Endothelial cell of umbilical vein (primary cell): ENCODE measurements at regions of chr6 and their contacts with region 1.

Region 1: GRCh38 chr6:123715006-123715875 is 78.5 kb upstream of the TRDN start:
- DNase-seq: peak; percentile 55
- H3K4me3 ChIP-seq: no peak overlapping the region
- H3K27ac ChIP-seq: no peak overlapping the region
- H3K4me1 ChIP-seq: no peaks in the 10 kb centered on the region
- H3K27me3 ChIP-seq: peaks cover 5 to 6% of the 10 kb centered on the region in 2 experiments
- CTCF ChIP-seq: peak; percentile 35 to 36
- POLR2A ChIP-seq: no peak

Region 2: GRCh38 chr6:122491919-122492555 is 1223.2 kb before region 1 on chr6:
- CTCF ChIA-PET with region 1: interaction called, 17 read pairs
- POLR2A ChIA-PET with region 1: no interaction called
- dilution Hi-C with region 1: no loop called
- intact Hi-C with region 1: no loop called
- DNase-seq: peak; percentile 78
- H3K4me3 ChIP-seq: no peak overlapping the region
- H3K27ac ChIP-seq: no peak overlapping the region
- H3K4me1 ChIP-seq: no peaks in the 10 kb centered on the region
- H3K27me3 ChIP-seq: peaks cover 2 to 12% of the 10 kb centered on the region in 2 experiments
- CTCF ChIP-seq: peak; percentile 76 to 82
- POLR2A ChIP-seq: no peak

Region 3: GRCh38 chr6:123380257-123380656 is 335.0 kb before region 1 on chr6:
- CTCF ChIA-PET with region 1: interaction called, 23 read pairs
- POLR2A ChIA-PET with region 1: no interaction called
- dilution Hi-C with region 1: no loop called
- intact Hi-C with region 1: no loop called
- DNase-seq: peak; percentile 6
- H3K4me3 ChIP-seq: no peak overlapping the region
- H3K27ac ChIP-seq: no peak overlapping the region
- H3K4me1 ChIP-seq: no peaks in the 10 kb centered on the region
- H3K27me3 ChIP-seq: no peaks in the 10 kb centered on the region
- CTCF ChIP-seq: peak in 1 of 2 donors; percentile 10
- POLR2A ChIP-seq: no peak

Region 4: GRCh38 chr6:123415844-123416468 is 299.3 kb before region 1 on chr6:
- CTCF ChIA-PET with region 1: interaction called, 474 read pairs
- POLR2A ChIA-PET with region 1: no interaction called
- dilution Hi-C with region 1: no loop called
- intact Hi-C with region 1: loop called (anchors 1 kb)
- DNase-seq: peak; percentile 56
- H3K4me3 ChIP-seq: no peak overlapping the region
- H3K27ac ChIP-seq: no peak overlapping the region
- H3K4me1 ChIP-seq: no peaks in the 10 kb centered on the region
- H3K27me3 ChIP-seq: peaks cover 2 to 6% of the 10 kb centered on the region in 2 experiments
- CTCF ChIP-seq: peak; percentile 50 to 54
- POLR2A ChIP-seq: no peak

Region 5: DNA sequence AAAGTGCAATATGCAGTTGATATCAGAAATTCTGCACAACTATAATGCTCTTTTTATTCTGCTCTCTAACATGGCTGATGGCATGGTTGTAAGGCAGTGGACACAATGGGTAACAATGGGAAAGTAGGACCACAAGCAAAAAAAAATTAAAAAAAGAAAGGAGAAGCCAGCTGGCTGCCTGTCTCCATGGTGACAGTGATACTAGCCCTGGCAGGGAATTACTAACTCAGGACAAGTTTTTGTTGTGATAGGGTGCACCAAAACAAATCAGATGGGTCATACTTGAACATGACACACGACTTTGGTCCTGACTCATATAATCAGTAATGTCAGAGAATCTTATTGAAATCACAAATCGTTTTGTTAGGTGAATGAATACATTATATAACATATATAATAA is 247.8 kb before region 1 on chr6:
- CTCF ChIA-PET with region 1: interaction called, 11 read pairs
- POLR2A ChIA-PET with region 1: no interaction called
- dilution Hi-C with region 1: no loop called
- intact Hi-C with region 1: no loop called
- DNase-seq: no peak
- H3K4me3 ChIP-seq: no peak overlapping the region
- H3K27ac ChIP-seq: no peak overlapping the region
- H3K4me1 ChIP-seq: no peaks in the 10 kb centered on the region
- H3K27me3 ChIP-seq: no peaks in the 10 kb centered on the region
- CTCF ChIP-seq: no peak
- POLR2A ChIP-seq: no peak

Region 6: GRCh38 chr6:123733180-123733956 is 18.1 kb after region 1 on chr6:
- CTCF ChIA-PET with region 1: interaction called, 25 read pairs
- POLR2A ChIA-PET with region 1: no interaction called
- dilution Hi-C with region 1: no loop called
- intact Hi-C with region 1: no loop called
- DNase-seq: no peak
- H3K4me3 ChIP-seq: no peak overlapping the region
- H3K27ac ChIP-seq: no peak overlapping the region
- H3K4me1 ChIP-seq: no peaks in the 10 kb centered on the region
- H3K27me3 ChIP-seq: no peaks in the 10 kb centered on the region
- CTCF ChIP-seq: no peak
- POLR2A ChIP-seq: no peak